Gastrocnemius medialis (tissue), 4 donors: ENCODE measurements at regions of chr11 and their contacts with region 1.

Region 1: GRCh38 chr11:85826116-85826855 is 15.3 kb upstream of the SYTL2 start:
- DNase-seq: no peak
- ATAC-seq: no peak
- H3K4me3 ChIP-seq: no peak overlapping the region
- H3K27ac ChIP-seq: no peak overlapping the region
- H3K4me1 ChIP-seq: no peaks in the 10 kb centered on the region
- H3K27me3 ChIP-seq: no peaks in the 10 kb centered on the region
- CTCF ChIP-seq: peak in 3 of 5 experiments; percentile 11 to 51 (median 34)
- POLR2A ChIP-seq: no peak

Region 2: DNA sequence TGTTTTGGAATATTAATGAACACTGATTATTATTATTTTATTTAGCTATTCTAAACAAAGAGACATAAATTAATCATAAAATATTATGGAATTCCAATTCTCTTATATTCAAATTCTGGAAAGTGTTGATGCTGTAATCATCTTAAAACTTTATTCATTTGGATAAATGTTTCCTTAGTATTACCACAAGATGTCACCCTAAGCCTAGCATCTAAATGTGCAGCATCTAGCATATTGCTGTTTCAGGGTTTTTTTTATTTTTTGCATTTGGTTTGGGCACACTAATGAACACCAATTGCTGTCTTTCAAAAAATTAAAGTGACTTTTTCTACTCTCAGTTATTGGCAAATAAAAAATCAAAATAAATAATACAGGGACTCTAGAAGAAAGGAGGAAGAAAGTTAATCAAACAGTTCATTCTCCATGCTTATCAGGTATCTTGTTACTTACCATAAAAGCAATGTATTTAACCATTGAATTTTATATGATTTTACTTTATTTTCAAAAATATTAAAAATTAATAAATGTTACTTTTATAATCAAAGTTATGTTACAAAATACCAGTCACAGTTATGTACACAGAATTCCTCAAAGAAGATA is 230.9 kb before region 1 on chr11:
- in situ Hi-C with region 1: loop called in 3 of 4 experiments (anchors 25 kb)
- intact Hi-C with region 1: loop called (anchors 10 kb)
- DNase-seq: no peak
- ATAC-seq: no peak
- H3K4me3 ChIP-seq: no peak overlapping the region
- H3K27ac ChIP-seq: no peak overlapping the region
- H3K4me1 ChIP-seq: no peaks in the 10 kb centered on the region
- H3K27me3 ChIP-seq: no peaks in the 10 kb centered on the region
- CTCF ChIP-seq: peak; percentile 40 to 78 (median 67)
- POLR2A ChIP-seq: no peak

Region 3: DNA sequence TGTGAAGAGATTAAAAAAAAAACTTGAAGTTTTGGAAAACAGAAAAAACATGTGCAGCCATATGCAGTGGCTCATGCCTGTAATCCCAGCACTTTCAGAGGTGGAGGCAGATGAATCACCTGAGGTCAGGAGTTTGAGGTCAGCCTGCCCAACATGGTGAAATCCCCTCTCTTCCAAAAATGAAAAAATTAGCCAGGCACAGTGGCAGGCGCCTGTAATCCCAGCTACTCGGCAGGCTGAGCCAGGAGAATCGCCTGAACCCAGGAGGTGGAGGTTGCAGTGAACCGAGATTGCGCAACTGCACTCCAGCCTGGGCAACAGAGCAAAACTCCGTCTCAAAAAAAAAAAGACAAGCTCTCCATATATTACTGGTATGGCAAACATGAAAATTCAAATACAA is 206.8 kb before region 1 on chr11:
- in situ Hi-C with region 1: loop called in 1 of 4 experiments (anchors 25 kb)
- intact Hi-C with region 1: no loop called
- DNase-seq: peak in 1 of 2 donors; percentile 39
- ATAC-seq: peak in 1 of 2 donors; percentile 30
- H3K4me3 ChIP-seq: no peak overlapping the region
- H3K27ac ChIP-seq: no peak overlapping the region
- H3K4me1 ChIP-seq: peaks cover 10 to 12% of the 10 kb centered on the region in 2 donors
- H3K27me3 ChIP-seq: no peaks in the 10 kb centered on the region
- CTCF ChIP-seq: no peak
- POLR2A ChIP-seq: no peak